Posterior cingulate gyrus (tissue), 11 donors: ENCODE measurements at regions of chr14 and their contacts with region 1.

Region 1: DNA sequence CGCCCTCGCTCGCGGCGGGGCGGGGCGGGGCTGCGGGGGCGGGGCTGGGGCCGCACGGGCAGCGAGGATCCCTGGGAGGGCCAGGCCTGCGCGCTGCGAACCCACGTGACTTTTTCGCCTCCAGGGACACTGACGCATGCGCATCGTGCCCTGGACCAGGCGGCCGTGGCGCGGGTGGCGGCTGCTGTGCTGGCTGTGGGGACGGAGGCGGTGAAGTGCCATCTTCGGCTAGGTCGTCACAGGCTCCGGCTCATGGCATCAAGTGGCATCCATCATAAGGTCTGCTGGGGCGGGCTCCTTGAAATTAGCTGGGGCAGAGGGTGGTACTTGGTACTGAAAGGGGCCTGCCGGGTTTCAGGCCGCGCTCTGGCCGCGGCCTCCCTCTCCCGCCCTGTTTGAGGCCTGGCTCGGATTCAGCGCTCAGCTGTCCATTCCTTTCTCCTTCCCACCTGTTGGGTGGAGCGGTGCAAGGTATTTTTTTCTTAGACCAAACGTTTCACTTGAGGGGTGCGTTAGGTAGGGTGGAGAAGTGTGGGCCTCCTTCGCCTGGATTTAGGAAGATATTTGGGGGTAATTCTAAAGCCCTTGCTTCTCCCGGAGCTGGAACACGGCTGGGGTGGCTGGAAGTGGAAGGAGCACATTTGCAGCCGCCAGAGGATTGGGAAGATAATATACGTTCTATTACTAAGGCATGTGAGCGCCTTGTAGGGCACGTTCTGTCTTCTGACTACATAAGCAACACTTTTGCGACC is at the start of gene PRPF39:
- DNase-seq: peak; percentile 87 to 99 (median 94)

Region 2: DNA sequence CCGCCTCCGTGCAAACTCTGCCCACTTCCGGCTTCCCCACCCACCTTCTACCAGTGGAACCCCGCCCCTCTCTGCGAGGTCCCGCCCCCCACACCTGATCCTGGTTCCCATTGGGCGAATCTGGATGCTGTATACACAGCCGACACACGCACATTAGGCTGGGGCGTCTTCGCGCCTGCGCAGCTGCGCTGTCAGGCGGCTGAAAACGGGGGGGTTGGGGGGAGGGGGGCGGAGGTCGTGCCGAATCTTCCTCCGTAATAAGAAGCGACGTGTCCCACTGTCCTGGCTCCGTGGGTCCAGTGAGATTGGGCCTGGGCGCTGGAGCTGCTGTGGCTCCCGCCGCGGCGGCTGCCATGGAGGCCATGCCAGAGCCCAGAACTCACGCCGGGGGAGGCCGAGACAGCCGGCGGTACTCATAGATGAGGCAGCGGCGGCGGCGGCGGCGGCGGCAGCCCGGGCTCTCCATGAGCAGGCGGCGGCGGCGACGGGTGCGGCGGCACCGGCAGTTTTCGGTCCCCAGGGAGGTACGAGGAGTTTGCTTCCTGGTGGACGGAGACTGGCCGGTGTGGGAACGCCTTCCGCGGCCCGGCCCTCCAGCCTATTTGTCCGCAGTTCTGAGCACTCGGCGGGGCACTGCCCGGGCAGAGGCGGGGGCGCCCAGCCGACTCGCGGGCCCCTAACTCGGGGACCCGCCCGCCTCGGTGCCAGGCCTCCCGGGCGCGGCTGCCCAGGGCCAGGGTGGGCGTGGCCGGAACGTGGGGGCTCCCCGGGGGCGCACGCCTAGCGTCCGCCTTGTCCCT is 186.9 kb before region 1 on chr14:
- intact Hi-C with region 1: loop called (anchors 5 kb)
- DNase-seq: peak; percentile 96 to 99 (median 98)